ENCODE measurements at regions of chr10 and their contacts with region 1.

Region 1: GRCh38 chr10:117174439-117175214 is 22.7 kb upstream of the KCNK18 start:
- H3K4me3 ChIP-seq: peak overlapping the region; percentile 25
- H3K27ac ChIP-seq: no peak overlapping the region
- H3K4me1 ChIP-seq: no peaks in the 10 kb centered on the region
- CTCF ChIP-seq: peak; percentile 84

Region 2: DNA sequence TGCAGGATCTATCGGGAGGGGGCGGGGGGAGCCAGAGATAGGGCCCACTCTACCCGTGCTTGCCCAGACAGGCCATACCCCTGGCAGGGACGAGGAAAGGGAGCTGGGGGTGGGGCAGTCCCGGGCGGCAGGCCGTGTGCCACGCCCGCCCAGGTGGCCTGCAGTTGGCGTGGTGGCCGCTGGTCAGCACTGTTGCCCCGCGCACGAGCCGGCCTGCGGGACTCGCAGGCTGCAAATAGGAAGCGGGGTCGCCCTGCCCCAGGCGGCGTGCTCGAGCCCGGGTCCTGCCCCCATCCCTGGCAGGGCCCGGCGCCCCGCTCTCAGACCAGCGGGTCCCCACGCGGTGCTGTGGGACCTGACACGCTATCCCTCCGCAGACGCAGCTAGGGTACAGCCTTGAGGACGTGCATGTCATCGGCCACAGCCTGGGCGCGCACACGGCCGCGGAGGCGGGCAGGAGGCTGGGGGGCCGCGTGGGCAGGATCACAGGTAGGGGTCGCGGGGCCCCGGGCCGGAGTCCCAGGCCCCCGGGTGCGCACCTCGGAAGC is 547.2 kb before region 1 on chr10:
- CTCF ChIA-PET with region 1: interaction called, 10 read pairs
- POLR2A ChIA-PET with region 1: no interaction called
- H3K4me3 ChIP-seq: peak overlapping the region; percentile 39
- H3K27ac ChIP-seq: no peak overlapping the region
- H3K4me1 ChIP-seq: no peaks in the 10 kb centered on the region
- CTCF ChIP-seq: 0 out of 2 replicates have a peak, but pooled peaks have one; percentile 22

Region 3: GRCh38 chr10:116683821-116684220 is 490.8 kb before region 1 on chr10:
- CTCF ChIA-PET with region 1: interaction called, 24 read pairs
- POLR2A ChIA-PET with region 1: no interaction called
- H3K4me3 ChIP-seq: no peak overlapping the region
- H3K27ac ChIP-seq: no peak overlapping the region
- H3K4me1 ChIP-seq: no peaks in the 10 kb centered on the region
- CTCF ChIP-seq: no peak

Region 4: DNA sequence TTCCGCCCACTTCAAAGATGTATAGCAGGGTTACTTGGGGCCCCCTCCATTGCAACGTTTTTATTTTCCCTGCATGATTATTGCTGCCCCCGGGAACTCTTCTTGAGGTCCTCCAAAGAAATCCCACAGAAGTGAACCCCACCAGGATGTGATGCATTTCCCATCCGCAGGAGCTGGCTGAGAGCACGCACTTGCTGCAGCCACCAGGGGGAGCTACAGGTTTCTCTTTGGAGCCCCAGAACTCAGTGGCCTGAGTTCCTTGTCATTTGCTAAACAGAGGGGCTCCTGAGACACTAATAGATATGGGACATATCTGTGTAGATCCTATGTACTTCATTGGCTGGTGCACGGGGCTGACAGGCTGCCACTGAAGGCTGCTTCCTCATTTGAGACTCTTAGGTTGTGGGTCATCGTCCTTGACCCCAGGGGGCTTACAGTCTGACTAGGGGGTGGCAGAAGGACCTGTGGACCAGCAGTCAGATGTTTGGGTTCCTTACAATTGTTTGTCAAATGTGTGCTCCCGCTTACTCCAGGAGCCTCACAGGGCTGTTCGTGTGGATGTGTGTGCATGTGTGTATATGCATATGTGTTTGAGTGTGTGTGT is 377.6 kb before region 1 on chr10:
- CTCF ChIA-PET with region 1: interaction called, 471 read pairs
- POLR2A ChIA-PET with region 1: interaction called, 8 read pairs
- H3K4me3 ChIP-seq: no peak overlapping the region
- H3K27ac ChIP-seq: no peak overlapping the region
- H3K4me1 ChIP-seq: no peaks in the 10 kb centered on the region
- CTCF ChIP-seq: peak; percentile 80

Region 5: GRCh38 chr10:116809483-116810119 is 365.0 kb before region 1 on chr10:
- CTCF ChIA-PET with region 1: interaction called, 13 read pairs
- POLR2A ChIA-PET with region 1: no interaction called
- H3K4me3 ChIP-seq: no peak overlapping the region
- H3K27ac ChIP-seq: no peak overlapping the region
- H3K4me1 ChIP-seq: no peaks in the 10 kb centered on the region
- CTCF ChIP-seq: no peak

Region 6: DNA sequence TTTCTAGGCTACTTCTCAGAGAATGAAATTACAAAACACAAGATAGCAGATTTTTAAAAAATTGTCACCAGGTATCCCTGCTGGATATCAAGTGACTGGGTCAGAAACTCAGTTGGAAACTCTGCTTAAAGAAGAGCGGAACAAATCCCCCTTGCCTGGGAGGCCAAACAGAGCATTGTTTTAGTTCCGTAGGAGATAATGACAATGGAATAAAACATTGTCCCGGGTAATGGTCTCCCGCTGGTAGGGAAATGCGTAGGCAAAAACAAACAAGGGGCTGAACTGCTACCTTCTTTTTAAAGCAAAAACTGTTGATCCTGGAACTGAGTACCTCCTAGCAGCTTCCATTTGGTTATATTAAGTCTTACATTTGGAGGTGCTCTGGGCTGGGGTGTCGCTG is 15.2 kb before region 1 on chr10:
- CTCF ChIA-PET with region 1: interaction called, 25 read pairs
- POLR2A ChIA-PET with region 1: no interaction called
- H3K4me3 ChIP-seq: no peak overlapping the region
- H3K27ac ChIP-seq: no peak overlapping the region
- H3K4me1 ChIP-seq: peaks cover 9% of the 10 kb centered on the region
- CTCF ChIP-seq: no peak

Region 7: GRCh38 chr10:117186832-117187615 is 12.4 kb after region 1 on chr10:
- CTCF ChIA-PET with region 1: interaction called, 15 read pairs
- POLR2A ChIA-PET with region 1: interaction called, 9 read pairs
- H3K4me3 ChIP-seq: no peak overlapping the region
- H3K27ac ChIP-seq: no peak overlapping the region
- H3K4me1 ChIP-seq: no peaks in the 10 kb centered on the region
- CTCF ChIP-seq: no peak

Region 8: DNA sequence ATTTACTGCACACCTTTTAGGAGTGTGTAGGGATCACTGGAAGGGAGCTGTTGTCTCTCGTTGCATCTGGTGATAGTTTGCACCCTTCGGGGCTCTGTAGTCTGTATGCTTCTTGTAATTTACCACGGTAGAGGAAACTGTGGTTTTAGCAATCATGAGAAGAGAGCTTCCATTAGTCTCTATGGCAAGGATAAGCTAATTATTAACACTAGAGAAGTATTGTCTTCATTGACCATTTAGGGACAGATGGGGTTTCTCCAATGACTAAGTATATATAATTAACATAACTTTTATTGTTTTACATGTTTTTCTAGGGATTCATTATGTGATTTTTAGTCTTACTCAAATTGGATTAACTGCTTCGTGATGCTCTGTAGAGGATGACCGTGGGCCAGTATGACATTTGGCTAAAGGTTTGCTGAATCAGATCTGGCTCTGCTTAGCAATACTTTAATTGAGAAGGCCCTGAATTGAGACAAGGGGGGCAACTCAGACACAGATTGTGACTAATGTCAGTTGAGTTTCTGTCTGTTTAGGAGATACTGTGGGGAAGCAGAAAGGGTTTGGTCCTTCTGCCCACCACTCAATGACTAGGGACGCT is 75.0 kb after region 1 on chr10:
- CTCF ChIA-PET with region 1: no interaction called
- POLR2A ChIA-PET with region 1: no interaction called
- H3K4me3 ChIP-seq: no peak overlapping the region
- H3K27ac ChIP-seq: no peak overlapping the region
- H3K4me1 ChIP-seq: no peaks in the 10 kb centered on the region
- CTCF ChIP-seq: no peak

Region 9: GRCh38 chr10:117271427-117271826 is 96.8 kb after region 1 on chr10:
- CTCF ChIA-PET with region 1: no interaction called
- POLR2A ChIA-PET with region 1: no interaction called
- H3K4me3 ChIP-seq: no peak overlapping the region
- H3K27ac ChIP-seq: no peak overlapping the region
- H3K4me1 ChIP-seq: no peaks in the 10 kb centered on the region
- CTCF ChIP-seq: no peak